ENCODE measurements at regions of chr1 and their contacts with region 1.

Region 1: DNA sequence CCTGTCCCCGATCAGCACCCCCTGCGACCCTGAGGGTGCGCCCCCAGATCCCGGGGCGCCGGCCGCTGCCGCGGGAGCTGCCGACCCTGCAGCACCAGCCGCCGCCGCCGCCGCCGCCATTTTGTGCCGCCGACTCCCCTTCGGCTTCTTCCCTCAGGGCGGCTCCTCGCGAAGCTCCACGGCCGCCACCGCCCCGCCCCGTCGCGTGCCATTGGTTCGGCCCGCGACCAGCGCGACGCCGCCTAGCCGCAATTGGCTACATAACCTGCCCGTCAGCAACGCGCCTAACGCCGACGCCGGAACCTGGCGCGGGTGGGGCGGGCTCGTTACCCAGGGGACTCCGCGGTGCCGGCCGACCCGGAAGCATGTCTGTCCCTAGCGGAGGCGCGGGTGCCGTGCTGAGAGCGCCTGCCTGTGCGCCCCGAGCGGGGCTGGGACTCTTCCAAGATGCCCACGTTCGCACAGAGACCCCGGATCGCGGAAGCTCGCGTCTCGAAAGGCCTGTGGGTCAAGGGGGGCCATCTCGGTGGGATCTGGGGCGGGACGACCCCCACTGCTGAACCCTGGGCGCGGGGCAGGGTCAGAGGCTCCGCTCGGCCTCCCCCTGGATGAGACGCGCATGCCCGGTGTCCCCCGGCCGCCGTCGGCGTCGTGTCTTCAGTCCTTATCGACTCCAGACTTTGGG is at the start of gene CCNL2:
- DNase-seq: peak; percentile 97
- ATAC-seq: peak; percentile 96
- H3K4me3 ChIP-seq: peak within 1 kb of the TSS; percentile 97
- H3K27ac ChIP-seq: peak within 1 kb of the TSS; percentile 96
- H3K4me1 ChIP-seq: peaks cover 12% of the 10 kb centered on the region
- H3K27me3 ChIP-seq: no peaks in the 10 kb centered on the region
- CTCF ChIP-seq: peak; percentile 55
- POLR2A ChIP-seq: peak; percentile 51
- RAD21 ChIP-seq: peak; percentile 22; the same call in 1 of the 2 replicates
- total RNA-seq, gene CCNL2: 53.9 and 61.1 TPM in 2 replicates

Region 2: GRCh38 chr1:1173793-1174415 is 225.4 kb before region 1 on chr1 and contains the start of gene TTLL10:
- CTCF ChIA-PET with region 1: no interaction called
- POLR2A ChIA-PET with region 1: no interaction called
- dilution Hi-C with region 1: no loop called
- in situ Hi-C with region 1: no loop called
- intact Hi-C with region 1: no loop called
- DNase-seq: no peak
- ATAC-seq: peak; percentile 24; the same call in 1 of the 2 replicates
- H3K4me3 ChIP-seq: no peak within 1 kb of the TSS
- H3K27ac ChIP-seq: no peak within 1 kb of the TSS
- H3K4me1 ChIP-seq: no peaks in the 10 kb centered on the region
- H3K27me3 ChIP-seq: peaks cover 72% of the 10 kb centered on the region
- CTCF ChIP-seq: no peak
- POLR2A ChIP-seq: no peak
- RAD21 ChIP-seq: no peak
- total RNA-seq, gene TTLL10: not detected in 2 replicates

Region 3: GRCh38 chr1:1208713-1209433 is 190.5 kb before region 1 on chr1:
- CTCF ChIA-PET with region 1: no interaction called
- POLR2A ChIA-PET with region 1: no interaction called
- dilution Hi-C with region 1: no loop called
- in situ Hi-C with region 1: no loop called
- intact Hi-C with region 1: no loop called
- DNase-seq: peak; percentile 30
- ATAC-seq: no peak
- H3K4me3 ChIP-seq: no peak overlapping the region
- H3K27ac ChIP-seq: peak overlapping the region; percentile 50; the same call in 1 of the 2 replicates
- H3K4me1 ChIP-seq: peaks cover 12% of the 10 kb centered on the region
- H3K27me3 ChIP-seq: no peaks in the 10 kb centered on the region; the same call in 1 of the 2 replicates
- CTCF ChIP-seq: no peak
- POLR2A ChIP-seq: no peak
- RAD21 ChIP-seq: no peak

Region 4: GRCh38 chr1:1349256-1350012 is 49.9 kb before region 1 on chr1 and contains the start of gene DVL1:
- CTCF ChIA-PET with region 1: no interaction called
- POLR2A ChIA-PET with region 1: no interaction called
- dilution Hi-C with region 1: no loop called
- in situ Hi-C with region 1: no loop called
- intact Hi-C with region 1: loop called (anchors 2 kb)
- DNase-seq: peak; percentile 58
- ATAC-seq: peak; percentile 67
- H3K4me3 ChIP-seq: peak within 1 kb of the TSS; percentile 100
- H3K27ac ChIP-seq: peak within 1 kb of the TSS; percentile 79
- H3K4me1 ChIP-seq: peaks cover 49% of the 10 kb centered on the region
- H3K27me3 ChIP-seq: no peaks in the 10 kb centered on the region
- CTCF ChIP-seq: peak; percentile 51
- POLR2A ChIP-seq: no peak
- RAD21 ChIP-seq: peak; percentile 51
- total RNA-seq, gene DVL1: 27.2 and 27.5 TPM in 2 replicates

Region 5: GRCh38 chr1:1471389-1472052 is 72.2 kb after region 1 on chr1 and contains the start of gene ATAD3B:
- CTCF ChIA-PET with region 1: no interaction called
- POLR2A ChIA-PET with region 1: no interaction called
- dilution Hi-C with region 1: no loop called
- in situ Hi-C with region 1: no loop called
- intact Hi-C with region 1: loop called (anchors 2 kb)
- DNase-seq: peak; percentile 90
- ATAC-seq: peak; percentile 97
- H3K4me3 ChIP-seq: peak within 1 kb of the TSS; percentile 88
- H3K27ac ChIP-seq: peak within 1 kb of the TSS; percentile 56
- H3K4me1 ChIP-seq: peaks cover 1% of the 10 kb centered on the region; the same call in 1 of the 2 replicates
- H3K27me3 ChIP-seq: no peaks in the 10 kb centered on the region
- CTCF ChIP-seq: no peak
- POLR2A ChIP-seq: peak; percentile 79
- RAD21 ChIP-seq: no peak
- total RNA-seq, gene ATAD3B: 13.8 and 28.6 TPM in 2 replicates

Region 6: DNA sequence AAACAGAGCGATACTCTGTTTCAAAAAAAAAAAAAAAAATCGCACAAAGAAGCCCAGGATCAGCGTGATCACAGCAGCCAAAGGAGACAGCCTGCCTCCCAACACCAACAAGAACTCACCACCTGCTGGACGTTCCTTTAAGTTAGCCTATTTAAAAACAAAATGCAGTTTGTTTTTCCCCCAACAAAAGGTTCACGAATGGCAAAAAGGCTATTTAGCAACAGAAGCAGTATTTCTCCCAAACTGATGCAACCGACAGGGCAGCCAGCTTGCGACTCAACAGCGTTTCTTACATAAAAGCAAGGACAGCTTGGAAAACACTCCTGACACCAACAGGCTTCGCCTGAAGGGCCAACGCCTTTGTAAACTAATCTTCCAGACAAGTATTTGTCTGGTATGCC is 168.6 kb after region 1 on chr1:
- CTCF ChIA-PET with region 1: no interaction called
- POLR2A ChIA-PET with region 1: no interaction called
- dilution Hi-C with region 1: no loop called
- in situ Hi-C with region 1: no loop called
- intact Hi-C with region 1: no loop called
- DNase-seq: no peak
- ATAC-seq: no peak
- H3K4me3 ChIP-seq: no peak overlapping the region
- H3K27ac ChIP-seq: peak overlapping the region; percentile 9; the same call in 1 of the 2 replicates
- H3K4me1 ChIP-seq: peaks cover 2% of the 10 kb centered on the region; the same call in 1 of the 2 replicates
- H3K27me3 ChIP-seq: no peaks in the 10 kb centered on the region
- CTCF ChIP-seq: no peak
- POLR2A ChIP-seq: no peak
- RAD21 ChIP-seq: no peak

Region 7: GRCh38 chr1:1678581-1679390 is 279.5 kb after region 1 on chr1:
- CTCF ChIA-PET with region 1: no interaction called
- POLR2A ChIA-PET with region 1: no interaction called
- dilution Hi-C with region 1: no loop called
- in situ Hi-C with region 1: no loop called
- intact Hi-C with region 1: no loop called
- DNase-seq: no peak
- ATAC-seq: peak; percentile 50; the same call in 1 of the 2 replicates
- H3K4me3 ChIP-seq: no peak overlapping the region
- H3K27ac ChIP-seq: no peak overlapping the region
- H3K4me1 ChIP-seq: peaks cover 2% of the 10 kb centered on the region; the same call in 1 of the 2 replicates
- H3K27me3 ChIP-seq: no peaks in the 10 kb centered on the region
- CTCF ChIP-seq: peak; percentile 28; the same call in 1 of the 2 replicates
- POLR2A ChIP-seq: no peak
- RAD21 ChIP-seq: no peak

Measured in IMR-90 (cell line).